Aorta (tissue), 5 donors: ENCODE measurements at regions of chr4 and their contacts with region 1.

Region 1: GRCh38 chr4:119314356-119314755 is 7.6 kb downstream of the FABP2 start:
- DNase-seq: no peak
- ATAC-seq: peak; percentile 87
- H3K4me3 ChIP-seq: no peak overlapping the region
- H3K27ac ChIP-seq: no peak overlapping the region
- H3K4me1 ChIP-seq: peaks cover 2 to 5% of the 10 kb centered on the region in 2 donors
- H3K27me3 ChIP-seq: no peaks in the 10 kb centered on the region

Region 2: GRCh38 chr4:119510395-119511149 is 196.2 kb after region 1 on chr4:
- intact Hi-C with region 1: loop called in 1 of 2 experiments (anchors 10 kb)
- DNase-seq: no peak
- ATAC-seq: peak; percentile 55
- H3K4me3 ChIP-seq: no peak overlapping the region
- H3K27ac ChIP-seq: no peak overlapping the region
- H3K4me1 ChIP-seq: peaks cover 5 to 7% of the 10 kb centered on the region in 2 donors
- H3K27me3 ChIP-seq: no peaks in the 10 kb centered on the region

Region 3: GRCh38 chr4:120056246-120056645 is 741.9 kb after region 1 on chr4:
- intact Hi-C with region 1: loop called (anchors 2 to 5 kb)
- DNase-seq: no peak
- ATAC-seq: no peak
- H3K4me3 ChIP-seq: no peak overlapping the region
- H3K27ac ChIP-seq: peak overlapping the region in 1 of 2 donors; percentile 67
- H3K4me1 ChIP-seq: peaks cover 0 to 10% of the 10 kb centered on the region in 2 donors
- H3K27me3 ChIP-seq: no peaks in the 10 kb centered on the region